ENCODE measurements at regions of chr7 and their contacts with region 1.

Region 1: DNA sequence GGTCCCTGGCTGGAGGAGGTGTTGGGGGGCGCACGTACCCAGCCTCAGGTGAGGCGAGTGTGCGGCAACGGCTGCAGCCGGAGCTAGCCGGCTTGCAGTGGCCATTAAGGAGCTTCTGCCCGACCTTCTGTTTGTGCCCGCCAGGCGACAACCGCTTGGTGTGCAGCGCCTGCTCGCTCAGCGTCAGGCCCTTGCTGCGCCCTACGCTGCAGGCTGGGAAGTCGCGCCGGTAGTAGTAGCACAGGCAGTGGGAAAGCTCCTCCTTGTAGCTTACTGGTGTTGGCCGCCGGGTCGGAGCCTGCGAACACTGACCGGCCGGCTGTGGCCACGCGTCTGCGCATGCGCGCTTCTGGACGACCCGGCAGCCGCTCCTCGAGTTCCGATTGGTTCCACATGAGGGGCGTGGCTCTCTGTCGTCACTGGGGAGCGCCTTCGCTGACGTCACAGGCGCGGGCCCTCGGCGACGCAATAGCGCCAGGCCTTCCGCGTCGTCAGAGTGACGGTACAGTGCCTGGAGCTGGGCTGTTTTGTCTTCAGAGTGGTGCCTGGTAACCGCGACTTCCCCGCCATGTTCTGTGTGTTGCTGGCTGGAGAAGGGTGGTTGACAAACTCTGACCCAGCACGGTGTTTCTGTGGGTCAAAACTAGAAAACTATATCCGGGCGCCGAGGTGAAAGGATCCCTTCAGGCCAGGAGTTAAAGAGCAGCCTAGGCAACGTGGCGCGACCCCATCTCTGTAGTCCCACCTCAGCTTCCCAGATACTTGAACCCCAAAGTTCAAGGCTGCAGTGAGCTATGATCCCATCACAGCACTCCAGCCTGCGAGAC is 76.3 kb upstream of the TMEM248 start:
- DNase-seq: peak; percentile 98 to 100 (median 99)
- ATAC-seq: peak; percentile 89
- H3K4me3 ChIP-seq: peak overlapping the region; percentile 99
- H3K4me3 Mint-ChIP-seq: peak overlapping the region; percentile 96
- H3K27ac ChIP-seq: peak overlapping the region; percentile 98 to 100
- H3K27ac Mint-ChIP-seq: peak overlapping the region; percentile 97
- H3K4me1 ChIP-seq: peaks cover 21% of the 10 kb centered on the region
- H3K4me1 Mint-ChIP-seq: peaks cover 24% of the 10 kb centered on the region
- H3K27me3 ChIP-seq: no peaks in the 10 kb centered on the region
- H3K27me3 Mint-ChIP-seq: peaks cover 3% of the 10 kb centered on the region
- CTCF ChIP-seq: peak; percentile 37

Region 2: GRCh38 chr7:66654123-66654732 is 190.5 kb before region 1 on chr7:
- CTCF ChIA-PET with region 1: no interaction called
- POLR2A ChIA-PET with region 1: interaction called, 23 read pairs
- intact Hi-C with region 1: loop called in 1 of 2 experiments (anchors 2 kb)
- DNase-seq: peak; percentile 94 to 99 (median 96)
- ATAC-seq: peak; percentile 90
- H3K4me3 ChIP-seq: peak overlapping the region; percentile 97
- H3K4me3 Mint-ChIP-seq: peak overlapping the region; percentile 99
- H3K27ac ChIP-seq: peak overlapping the region; percentile 91 to 92
- H3K27ac Mint-ChIP-seq: peak overlapping the region; percentile 97
- H3K4me1 ChIP-seq: peaks cover 26% of the 10 kb centered on the region
- H3K4me1 Mint-ChIP-seq: peaks cover 47% of the 10 kb centered on the region
- H3K27me3 ChIP-seq: no peaks in the 10 kb centered on the region
- H3K27me3 Mint-ChIP-seq: no peaks in the 10 kb centered on the region
- CTCF ChIP-seq: peak; percentile 35

Region 3: DNA sequence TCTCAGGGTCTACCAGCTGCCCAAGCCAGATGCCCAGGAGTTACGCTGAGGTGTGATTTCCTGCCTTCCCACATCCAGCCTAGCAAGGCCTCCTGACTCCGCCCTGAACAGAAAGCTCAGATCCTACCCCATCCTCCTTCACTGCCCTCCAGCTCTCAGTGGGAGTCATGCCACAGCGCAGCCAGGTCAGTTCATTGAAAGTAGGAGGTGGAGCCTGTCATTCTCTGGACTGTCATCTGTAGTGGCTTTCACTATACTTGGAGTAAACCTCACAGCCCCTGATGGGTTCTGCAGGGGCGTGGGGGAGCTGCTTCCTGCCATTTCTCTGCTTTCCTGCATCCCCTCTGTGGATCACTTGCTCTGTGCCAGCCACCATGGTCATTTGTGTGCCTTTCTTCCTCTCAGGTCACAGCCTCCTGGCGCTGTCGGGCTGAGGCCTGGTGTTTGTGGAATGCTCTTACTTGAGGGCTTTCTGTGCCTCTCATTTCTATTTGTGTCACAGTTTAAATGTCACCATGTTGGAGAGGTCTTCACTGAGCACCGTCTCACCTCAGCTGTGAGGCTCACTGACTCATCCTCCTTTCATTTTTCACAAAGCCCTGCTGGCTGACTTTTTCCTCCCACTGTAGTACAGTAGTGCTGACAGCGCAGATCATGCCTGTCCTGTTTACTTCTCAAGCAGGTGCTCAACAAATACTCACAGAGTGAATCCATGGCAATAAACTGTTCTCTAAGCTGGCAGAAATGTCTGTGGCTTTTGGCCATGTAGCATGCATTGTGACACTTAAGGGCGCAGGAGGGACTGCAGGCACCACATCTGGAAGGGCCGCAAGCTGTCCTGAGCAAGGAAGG is 15.3 kb after region 1 on chr7:
- CTCF ChIA-PET with region 1: no interaction called
- POLR2A ChIA-PET with region 1: interaction called, 25 read pairs
- intact Hi-C with region 1: no loop called
- DNase-seq: peak in 4 of 14 experiments; percentile 6 to 41 (median 14)
- ATAC-seq: peak; percentile 75
- H3K4me3 ChIP-seq: no peak overlapping the region
- H3K4me3 Mint-ChIP-seq: peak overlapping the region; percentile 46
- H3K27ac ChIP-seq: peak overlapping the region in 1 of 2 donors; percentile 37
- H3K27ac Mint-ChIP-seq: peak overlapping the region; percentile 93
- H3K4me1 ChIP-seq: peaks cover 18% of the 10 kb centered on the region
- H3K4me1 Mint-ChIP-seq: peaks cover 15% of the 10 kb centered on the region
- H3K27me3 ChIP-seq: no peaks in the 10 kb centered on the region
- H3K27me3 Mint-ChIP-seq: no peaks in the 10 kb centered on the region
- CTCF ChIP-seq: no peak

Region 4: GRCh38 chr7:66910789-66911188 is 66.0 kb after region 1 on chr7:
- CTCF ChIA-PET with region 1: no interaction called
- POLR2A ChIA-PET with region 1: no interaction called
- intact Hi-C with region 1: no loop called
- DNase-seq: no peak
- ATAC-seq: no peak
- H3K4me3 ChIP-seq: no peak overlapping the region
- H3K4me3 Mint-ChIP-seq: no peak overlapping the region
- H3K27ac ChIP-seq: no peak overlapping the region
- H3K27ac Mint-ChIP-seq: no peak overlapping the region
- H3K4me1 ChIP-seq: no peaks in the 10 kb centered on the region
- H3K4me1 Mint-ChIP-seq: no peaks in the 10 kb centered on the region
- H3K27me3 ChIP-seq: no peaks in the 10 kb centered on the region
- H3K27me3 Mint-ChIP-seq: no peaks in the 10 kb centered on the region
- CTCF ChIP-seq: no peak

Region 5: DNA sequence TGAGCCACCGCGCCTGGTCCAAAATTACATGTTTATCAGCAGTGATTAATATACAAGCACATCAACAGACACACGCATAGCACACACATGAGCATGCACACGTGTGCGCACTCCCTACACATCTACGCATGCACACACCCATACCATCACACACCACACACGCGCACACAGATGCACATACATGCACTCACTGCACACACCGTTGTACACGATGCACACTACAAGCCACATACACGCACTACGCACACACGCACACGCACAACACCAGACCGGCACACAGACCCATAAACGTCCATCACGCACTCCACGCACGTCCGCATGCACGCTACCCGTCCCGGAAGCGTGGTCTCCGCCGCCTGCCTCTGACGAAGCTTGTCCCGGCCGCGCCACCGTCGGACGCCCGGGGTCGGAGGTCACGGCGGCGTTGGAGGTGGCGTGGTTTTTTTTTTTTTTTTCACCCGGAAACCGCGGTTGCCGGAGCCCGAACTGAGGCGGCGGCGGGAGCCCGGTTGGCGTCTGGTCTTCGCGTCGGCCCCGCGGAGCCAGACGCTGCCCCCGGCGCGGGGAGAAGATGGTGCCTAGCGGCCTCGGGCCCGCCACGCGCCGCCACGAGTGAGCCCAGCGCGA is 76.1 kb after region 1 on chr7 and contains the start of gene TMEM248:
- CTCF ChIA-PET with region 1: interaction called, 4 read pairs
- POLR2A ChIA-PET with region 1: interaction called, 52 read pairs
- intact Hi-C with region 1: loop called (anchors 2 kb)
- DNase-seq: peak; percentile 85 to 96 (median 91)
- ATAC-seq: peak; percentile 86
- H3K4me3 ChIP-seq: peak within 1 kb of the TSS; percentile 95
- H3K4me3 Mint-ChIP-seq: peak within 1 kb of the TSS; percentile 100
- H3K27ac ChIP-seq: peak within 1 kb of the TSS; percentile 76 to 90
- H3K27ac Mint-ChIP-seq: peak within 1 kb of the TSS; percentile 99
- H3K4me1 ChIP-seq: peaks cover 42% of the 10 kb centered on the region
- H3K4me1 Mint-ChIP-seq: peaks cover 43% of the 10 kb centered on the region
- H3K27me3 ChIP-seq: no peaks in the 10 kb centered on the region
- H3K27me3 Mint-ChIP-seq: no peaks in the 10 kb centered on the region
- CTCF ChIP-seq: no peak
- total RNA-seq, gene TMEM248: 64.7 to 67.4 TPM